SK-N-SH (cell line): ENCODE measurements at regions of chr2 and their contacts with region 1.

Region 1: DNA sequence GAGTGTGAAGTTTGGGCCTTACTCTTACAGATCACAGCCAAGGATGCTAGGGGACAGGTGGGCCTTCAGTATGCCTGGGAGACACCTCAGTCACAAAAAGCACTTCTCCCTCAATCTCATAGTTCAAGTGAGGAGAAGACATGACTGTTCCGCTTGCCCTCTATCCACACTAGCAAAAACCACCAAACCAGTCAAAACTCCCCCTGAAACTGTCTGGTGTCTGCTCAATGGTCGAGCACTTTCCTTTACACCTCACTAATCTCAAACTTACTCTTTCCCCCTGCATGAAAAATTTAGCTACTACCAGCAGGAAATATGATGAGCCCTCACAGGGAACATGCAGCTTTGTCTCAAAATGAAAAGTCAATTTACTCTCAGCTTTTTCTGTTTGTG is 232.2 kb downstream of the TRIB2 start:
- DNase-seq: no peak
- H3K4me3 ChIP-seq: no peak overlapping the region; a peak in 1 of 4 replicates
- H3K27ac ChIP-seq: peak overlapping the region; percentile 59 to 100
- H3K4me1 ChIP-seq: peaks cover 32 to 37% of the 10 kb centered on the region in 2 experiments
- H3K27me3 ChIP-seq: no peaks in the 10 kb centered on the region
- CTCF ChIP-seq: no peak
- EP300 ChIP-seq: no peak
- RAD21 ChIP-seq: no peak

Region 2: GRCh38 chr2:12807907-12808810 is 140.8 kb before region 1 on chr2:
- CTCF ChIA-PET with region 1: no interaction called
- POLR2A ChIA-PET with region 1: no interaction called
- DNase-seq: no peak
- H3K4me3 ChIP-seq: no peak overlapping the region
- H3K27ac ChIP-seq: no peak overlapping the region
- H3K4me1 ChIP-seq: peaks cover 8 to 10% of the 10 kb centered on the region in 2 experiments; a peak in 3 of 4 replicates
- H3K27me3 ChIP-seq: no peaks in the 10 kb centered on the region
- CTCF ChIP-seq: no peak
- EP300 ChIP-seq: no peak
- RAD21 ChIP-seq: no peak

Region 3: DNA sequence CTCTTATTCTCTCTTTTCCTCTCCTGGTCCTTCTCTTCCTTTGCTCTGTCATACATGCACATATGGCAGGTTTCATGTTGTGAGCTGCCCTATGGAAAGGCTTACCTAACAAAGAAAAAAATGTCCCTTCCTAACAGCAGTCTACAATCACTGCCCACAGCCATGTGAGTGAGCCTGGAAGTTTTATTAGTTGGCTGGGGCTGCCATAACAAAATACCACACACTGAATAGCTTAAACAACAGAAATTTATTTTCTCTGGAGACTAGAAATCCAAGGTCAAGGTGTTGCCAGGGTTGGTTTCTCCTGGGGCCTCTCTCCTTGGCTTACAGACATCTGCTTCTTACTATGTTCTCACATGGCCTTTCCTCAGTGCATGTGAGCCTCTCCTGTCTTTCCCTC is 90.2 kb before region 1 on chr2:
- CTCF ChIA-PET with region 1: no interaction called
- POLR2A ChIA-PET with region 1: no interaction called
- DNase-seq: no peak
- H3K4me3 ChIP-seq: no peak overlapping the region
- H3K27ac ChIP-seq: no peak overlapping the region
- H3K4me1 ChIP-seq: peaks cover 0 to 19% of the 10 kb centered on the region in 2 experiments; a peak in 3 of 4 replicates
- H3K27me3 ChIP-seq: no peaks in the 10 kb centered on the region
- CTCF ChIP-seq: no peak
- EP300 ChIP-seq: no peak
- RAD21 ChIP-seq: no peak

Region 4: GRCh38 chr2:12965540-12966269 is 16.7 kb after region 1 on chr2:
- CTCF ChIA-PET with region 1: interaction called, 10 read pairs
- POLR2A ChIA-PET with region 1: interaction called, 9 read pairs
- DNase-seq: peak; percentile 55
- H3K4me3 ChIP-seq: no peak overlapping the region
- H3K27ac ChIP-seq: peak overlapping the region; percentile 33 to 98; a peak in 3 of 4 replicates
- H3K4me1 ChIP-seq: peaks cover 7 to 31% of the 10 kb centered on the region in 2 experiments
- H3K27me3 ChIP-seq: no peaks in the 10 kb centered on the region
- CTCF ChIP-seq: no peak
- EP300 ChIP-seq: peak; percentile 84 to 85
- RAD21 ChIP-seq: no peak